K562 (cell line): ENCODE measurements at regions of chr1 and their contacts with region 1.

Region 1: DNA sequence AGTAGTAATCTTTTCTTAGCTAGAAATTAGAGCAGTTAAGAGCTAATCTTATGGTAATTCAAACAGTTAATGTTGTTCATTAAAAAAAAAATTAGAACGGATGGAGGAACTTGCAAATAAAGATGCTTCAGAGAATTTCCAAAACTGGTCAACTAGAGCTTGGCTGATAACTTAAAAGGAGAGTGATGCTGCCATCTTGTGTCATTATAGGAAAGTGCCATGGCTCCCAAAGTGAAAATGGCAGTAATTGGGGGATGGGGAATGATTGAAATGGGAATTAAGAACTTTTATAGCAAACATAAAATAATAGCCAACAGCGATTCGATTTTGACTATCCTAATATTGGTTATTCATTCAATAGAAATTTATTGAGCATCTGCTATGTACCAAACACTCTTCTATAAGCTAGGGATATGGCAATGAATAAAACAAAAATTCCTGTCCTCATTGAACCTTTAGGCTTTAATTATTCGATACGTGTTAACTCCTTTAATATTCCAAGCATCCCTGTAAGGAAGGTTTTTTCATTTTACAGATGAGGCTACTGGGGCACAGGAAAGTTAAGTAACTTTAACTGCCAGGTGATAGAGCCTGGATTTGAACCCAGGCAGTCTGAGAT is 5.7 kb upstream of the PLPP3 start:
- DNase-seq: peak; percentile 37 to 49 (median 48)
- ATAC-seq: peak; percentile 70; the same call in 2 of the 3 replicates
- H3K4me3 ChIP-seq: no peak overlapping the region
- H3K27ac ChIP-seq: no peak overlapping the region
- H3K4me1 ChIP-seq: no peaks in the 10 kb centered on the region
- H3K27me3 ChIP-seq: no peaks in the 10 kb centered on the region; a peak in 1 of 5 replicates
- CTCF ChIP-seq: peak; percentile 46 to 79 (median 65); a peak in 5 of 6 replicates
- EP300 ChIP-seq: no peak
- POLR2A ChIP-seq: no peak
- RAD21 ChIP-seq: peak; percentile 88 to 89

Region 2: GRCh38 chr1:56235909-56236510 is 349.0 kb before region 1 on chr1:
- CTCF ChIA-PET with region 1: no interaction called
- POLR2A ChIA-PET with region 1: no interaction called
- in situ Hi-C with region 1: no loop called
- intact Hi-C with region 1: loop called (anchors 10 kb)
- DNase-seq: no peak
- ATAC-seq: no peak
- H3K4me3 ChIP-seq: no peak overlapping the region
- H3K27ac ChIP-seq: no peak overlapping the region
- H3K4me1 ChIP-seq: no peaks in the 10 kb centered on the region
- H3K27me3 ChIP-seq: no peaks in the 10 kb centered on the region
- CTCF ChIP-seq: no peak
- EP300 ChIP-seq: no peak
- POLR2A ChIP-seq: no peak
- RAD21 ChIP-seq: no peak

Region 3: DNA sequence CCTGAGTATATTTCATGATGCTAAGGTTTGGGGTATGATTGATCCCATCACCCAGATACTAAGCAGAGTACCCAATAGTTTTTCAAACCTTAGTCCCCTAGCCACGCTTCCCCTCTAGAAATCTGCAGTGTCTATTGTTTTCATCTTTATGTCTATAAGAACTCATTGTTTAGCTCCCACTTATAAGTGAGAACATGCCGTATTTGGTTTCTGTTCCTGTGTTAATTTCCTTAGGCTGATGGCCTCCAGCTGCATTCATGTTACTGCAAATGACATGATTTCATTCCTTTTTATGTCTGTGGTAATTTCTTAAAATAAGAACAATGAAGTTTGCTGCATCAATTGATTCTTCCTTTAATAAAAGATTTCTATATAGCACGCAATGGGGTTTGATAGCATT is 307.0 kb before region 1 on chr1:
- CTCF ChIA-PET with region 1: no interaction called
- POLR2A ChIA-PET with region 1: no interaction called
- in situ Hi-C with region 1: no loop called
- intact Hi-C with region 1: no loop called
- DNase-seq: no peak
- ATAC-seq: no peak
- H3K4me3 ChIP-seq: no peak overlapping the region
- H3K27ac ChIP-seq: no peak overlapping the region
- H3K4me1 ChIP-seq: no peaks in the 10 kb centered on the region
- H3K27me3 ChIP-seq: no peaks in the 10 kb centered on the region
- CTCF ChIP-seq: no peak
- EP300 ChIP-seq: no peak
- POLR2A ChIP-seq: no peak
- RAD21 ChIP-seq: no peak

Region 4: GRCh38 chr1:56301847-56302246 is 283.2 kb before region 1 on chr1:
- CTCF ChIA-PET with region 1: no interaction called
- POLR2A ChIA-PET with region 1: no interaction called
- in situ Hi-C with region 1: no loop called
- intact Hi-C with region 1: no loop called
- DNase-seq: no peak
- ATAC-seq: no peak
- H3K4me3 ChIP-seq: no peak overlapping the region
- H3K27ac ChIP-seq: no peak overlapping the region
- H3K4me1 ChIP-seq: no peaks in the 10 kb centered on the region
- H3K27me3 ChIP-seq: no peaks in the 10 kb centered on the region
- CTCF ChIP-seq: no peak
- EP300 ChIP-seq: no peak
- POLR2A ChIP-seq: no peak
- RAD21 ChIP-seq: no peak

Region 5: GRCh38 chr1:56409094-56409691 is 175.8 kb before region 1 on chr1:
- CTCF ChIA-PET with region 1: interaction called, 5 read pairs
- POLR2A ChIA-PET with region 1: no interaction called
- in situ Hi-C with region 1: no loop called
- intact Hi-C with region 1: loop called (anchors 2 kb)
- DNase-seq: peak; percentile 14 to 37 (median 25)
- ATAC-seq: peak; percentile 83
- H3K4me3 ChIP-seq: no peak overlapping the region
- H3K27ac ChIP-seq: no peak overlapping the region
- H3K4me1 ChIP-seq: no peaks in the 10 kb centered on the region
- H3K27me3 ChIP-seq: peaks cover 0 to 4% of the 10 kb centered on the region in 2 experiments; a peak in 1 of 5 replicates
- CTCF ChIP-seq: peak; percentile 46 to 50 (median 50); a peak in 5 of 6 replicates
- EP300 ChIP-seq: no peak
- POLR2A ChIP-seq: no peak
- RAD21 ChIP-seq: peak in 1 of 2 experiments; percentile 47; a peak in 2 of 4 replicates

Region 6: GRCh38 chr1:56676571-56677035 is 91.6 kb after region 1 on chr1:
- CTCF ChIA-PET with region 1: no interaction called
- POLR2A ChIA-PET with region 1: no interaction called
- in situ Hi-C with region 1: no loop called
- intact Hi-C with region 1: no loop called
- DNase-seq: no peak
- ATAC-seq: no peak
- H3K4me3 ChIP-seq: no peak overlapping the region
- H3K27ac ChIP-seq: no peak overlapping the region
- H3K4me1 ChIP-seq: no peaks in the 10 kb centered on the region
- H3K27me3 ChIP-seq: no peaks in the 10 kb centered on the region
- CTCF ChIP-seq: no peak
- EP300 ChIP-seq: no peak
- POLR2A ChIP-seq: no peak
- RAD21 ChIP-seq: no peak

Region 7: DNA sequence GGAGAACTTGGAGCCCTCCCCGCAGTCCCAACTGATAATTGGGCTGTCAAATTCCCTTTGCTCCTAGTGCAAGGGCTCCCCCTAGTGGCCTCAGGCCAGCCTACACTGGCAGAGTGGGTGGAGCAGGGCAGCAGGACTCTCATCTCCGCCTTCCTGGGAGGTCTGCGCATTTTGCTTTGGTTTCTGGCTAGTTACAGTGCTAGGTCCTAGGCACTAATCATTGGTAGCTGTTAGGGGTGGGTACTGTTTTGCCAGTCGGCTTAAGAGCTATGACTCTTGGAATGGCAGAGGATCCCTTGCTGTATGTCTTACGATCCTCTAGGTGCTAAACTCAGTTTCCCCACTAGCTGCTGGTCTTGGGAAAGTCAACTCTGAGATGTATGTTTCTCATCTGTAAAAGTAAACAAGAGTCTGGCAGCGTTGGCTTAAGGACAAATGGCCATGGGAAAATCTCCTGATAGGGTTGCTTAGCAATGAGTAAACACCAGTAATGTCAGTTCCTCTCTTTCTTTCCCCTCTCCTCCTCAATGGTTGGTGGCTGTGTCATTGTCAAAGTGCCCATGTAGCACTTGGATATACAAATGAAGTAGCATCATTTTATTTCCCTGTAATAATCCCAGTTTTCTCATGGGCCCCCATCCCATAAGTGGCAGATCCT is 236.2 kb after region 1 on chr1:
- CTCF ChIA-PET with region 1: no interaction called
- POLR2A ChIA-PET with region 1: no interaction called
- in situ Hi-C with region 1: no loop called
- intact Hi-C with region 1: loop called (anchors 5 kb)
- DNase-seq: peak; percentile 80 to 85 (median 81)
- ATAC-seq: peak; percentile 99
- H3K4me3 ChIP-seq: no peak overlapping the region
- H3K27ac ChIP-seq: no peak overlapping the region
- H3K4me1 ChIP-seq: no peaks in the 10 kb centered on the region
- H3K27me3 ChIP-seq: peaks cover 0 to 8% of the 10 kb centered on the region in 2 experiments; a peak in 2 of 5 replicates
- CTCF ChIP-seq: peak; percentile 82 to 94 (median 88)
- EP300 ChIP-seq: no peak
- POLR2A ChIP-seq: no peak
- RAD21 ChIP-seq: peak; percentile 47 to 80